Dendritic cell treated with granulocyte-macrophage colony-stimulating factor and Interleukin-4, amounts not matched to agents 40 ng/mL and 50 ng/mL, for 4 days (primary cell): ENCODE measurements at regions of chr1 and their contacts with region 1.

Region 1: GRCh38 chr1:198699167-198700015 is 60.6 kb downstream of the PTPRC start:
- H3K4me3 Mint-ChIP-seq: no peak overlapping the region
- H3K27ac Mint-ChIP-seq: peak overlapping the region; percentile 23
- H3K4me1 Mint-ChIP-seq: peaks cover 30% of the 10 kb centered on the region
- H3K27me3 Mint-ChIP-seq: no peaks in the 10 kb centered on the region

Region 2: DNA sequence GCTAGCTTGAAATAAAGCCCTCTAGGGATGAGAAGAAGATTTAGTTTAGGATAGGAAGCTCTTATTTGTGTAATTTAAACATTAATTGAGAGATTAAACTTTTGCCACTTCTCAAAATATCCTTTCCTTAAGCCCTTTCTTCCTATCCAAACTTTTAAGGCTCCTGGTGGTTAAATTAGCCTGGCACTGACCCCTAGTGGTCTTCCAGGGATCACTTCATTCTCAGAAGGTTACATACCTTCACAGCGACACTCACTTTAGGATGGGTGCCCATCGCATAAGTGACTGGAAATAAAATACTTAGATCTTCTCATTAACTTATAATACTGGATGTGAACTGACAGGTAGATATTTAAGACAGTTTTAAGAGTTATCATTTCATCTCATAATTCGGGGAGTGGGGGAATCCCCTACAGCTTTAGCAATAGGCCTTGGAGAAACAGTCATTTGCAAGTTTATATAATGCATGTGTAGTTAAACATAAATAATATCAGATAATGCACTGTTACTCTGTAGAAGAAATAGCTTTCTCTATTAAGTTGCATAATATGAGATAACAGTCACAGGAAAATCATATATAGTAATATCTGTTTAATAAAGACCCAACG is 774.8 kb before region 1 on chr1:
- intact Hi-C with region 1: no loop called
- H3K4me3 Mint-ChIP-seq: no peak overlapping the region
- H3K27ac Mint-ChIP-seq: no peak overlapping the region
- H3K4me1 Mint-ChIP-seq: peaks cover 23% of the 10 kb centered on the region
- H3K27me3 Mint-ChIP-seq: peaks cover 80% of the 10 kb centered on the region

Region 3: DNA sequence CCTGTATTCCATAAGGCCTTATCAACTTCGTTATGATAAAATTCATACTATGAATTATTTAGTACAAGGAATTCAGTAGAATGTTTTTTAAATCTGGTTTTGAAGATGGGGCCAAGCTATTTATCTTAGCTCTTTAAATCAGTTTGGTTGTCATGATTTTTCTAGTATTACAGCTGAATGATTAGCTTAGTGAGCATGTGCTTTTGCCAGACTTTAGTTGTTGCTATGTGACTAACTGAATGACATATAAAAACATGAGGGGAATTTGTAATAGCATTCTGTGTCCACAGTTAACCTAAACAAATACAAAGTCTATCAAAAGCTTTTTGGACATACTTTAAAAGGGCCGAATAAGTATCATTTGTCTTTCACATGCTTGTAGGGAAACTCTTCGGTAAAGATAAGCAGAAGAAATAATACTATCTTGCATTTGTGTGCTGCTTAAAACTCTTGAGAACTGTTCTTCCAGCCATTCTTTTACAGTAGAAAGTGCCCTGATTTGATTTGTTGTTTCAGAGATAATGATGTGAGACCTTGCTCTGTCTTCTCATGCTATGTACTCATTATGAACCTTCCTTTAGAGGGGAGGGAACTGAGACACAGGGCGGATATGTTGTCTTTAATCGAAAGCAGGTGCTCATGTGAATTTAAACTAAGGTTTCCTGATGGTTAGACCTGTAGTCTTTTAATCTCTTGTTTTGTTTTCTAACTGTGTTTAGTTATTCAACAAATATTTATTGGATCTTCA is 523.8 kb before region 1 on chr1:
- intact Hi-C with region 1: no loop called
- H3K4me3 Mint-ChIP-seq: no peak overlapping the region
- H3K27ac Mint-ChIP-seq: no peak overlapping the region
- H3K4me1 Mint-ChIP-seq: peaks cover 67% of the 10 kb centered on the region
- H3K27me3 Mint-ChIP-seq: no peaks in the 10 kb centered on the region

Region 4: GRCh38 chr1:198298640-198299039 is 400.8 kb before region 1 on chr1:
- intact Hi-C with region 1: loop called (anchors 10 kb)
- H3K4me3 Mint-ChIP-seq: no peak overlapping the region
- H3K27ac Mint-ChIP-seq: no peak overlapping the region
- H3K4me1 Mint-ChIP-seq: no peaks in the 10 kb centered on the region
- H3K27me3 Mint-ChIP-seq: no peaks in the 10 kb centered on the region

Region 5: DNA sequence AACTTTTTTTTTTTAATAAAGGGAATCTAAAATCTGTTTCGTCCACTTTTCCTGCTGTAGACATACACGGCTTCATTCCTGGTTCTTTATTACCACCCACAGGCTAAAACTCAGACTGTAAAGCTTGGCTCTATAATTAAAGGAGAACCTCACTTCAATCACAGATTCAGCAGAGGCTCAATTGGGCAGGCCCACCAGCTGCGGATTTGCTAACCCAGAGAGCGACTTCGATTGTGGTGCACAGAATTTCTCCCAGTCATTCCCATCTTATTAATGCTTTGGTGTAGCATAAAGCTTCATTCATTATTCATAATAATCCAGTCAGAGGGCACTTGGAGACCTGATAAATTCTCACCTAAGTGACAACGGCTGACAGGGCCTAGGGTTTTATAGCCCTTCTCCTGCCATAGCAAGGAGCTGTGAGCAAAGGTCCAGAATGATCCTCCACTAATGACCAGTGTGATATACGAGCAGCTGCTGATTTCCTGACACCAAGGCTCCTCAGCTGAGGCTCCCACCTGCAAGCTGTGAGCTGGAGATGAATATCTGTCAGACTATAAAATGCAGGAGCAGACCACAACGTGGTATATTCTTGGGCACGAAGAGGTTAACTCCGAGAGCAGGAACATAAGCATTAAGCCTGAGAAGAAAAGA is 307.9 kb before region 1 on chr1:
- intact Hi-C with region 1: no loop called
- H3K4me3 Mint-ChIP-seq: no peak overlapping the region
- H3K27ac Mint-ChIP-seq: no peak overlapping the region
- H3K4me1 Mint-ChIP-seq: no peaks in the 10 kb centered on the region
- H3K27me3 Mint-ChIP-seq: no peaks in the 10 kb centered on the region